GM12878 (cell line): ENCODE measurements at regions of chr3 and their contacts with region 1.

Region 1: GRCh38 chr3:189710620-189711402 is 79.6 kb downstream of the TP63 start:
- DNase-seq: peak; percentile 71
- ATAC-seq: peak; percentile 84
- H3K4me3 ChIP-seq: no peak overlapping the region
- H3K27ac ChIP-seq: peak overlapping the region; percentile 40
- H3K4me1 ChIP-seq: peaks cover 30% of the 10 kb centered on the region
- H3K27me3 ChIP-seq: no peaks in the 10 kb centered on the region
- CTCF ChIP-seq: no peak
- EP300 ChIP-seq: no peak
- POLR2A ChIP-seq: no peak
- RAD21 ChIP-seq: no peak

Region 2: DNA sequence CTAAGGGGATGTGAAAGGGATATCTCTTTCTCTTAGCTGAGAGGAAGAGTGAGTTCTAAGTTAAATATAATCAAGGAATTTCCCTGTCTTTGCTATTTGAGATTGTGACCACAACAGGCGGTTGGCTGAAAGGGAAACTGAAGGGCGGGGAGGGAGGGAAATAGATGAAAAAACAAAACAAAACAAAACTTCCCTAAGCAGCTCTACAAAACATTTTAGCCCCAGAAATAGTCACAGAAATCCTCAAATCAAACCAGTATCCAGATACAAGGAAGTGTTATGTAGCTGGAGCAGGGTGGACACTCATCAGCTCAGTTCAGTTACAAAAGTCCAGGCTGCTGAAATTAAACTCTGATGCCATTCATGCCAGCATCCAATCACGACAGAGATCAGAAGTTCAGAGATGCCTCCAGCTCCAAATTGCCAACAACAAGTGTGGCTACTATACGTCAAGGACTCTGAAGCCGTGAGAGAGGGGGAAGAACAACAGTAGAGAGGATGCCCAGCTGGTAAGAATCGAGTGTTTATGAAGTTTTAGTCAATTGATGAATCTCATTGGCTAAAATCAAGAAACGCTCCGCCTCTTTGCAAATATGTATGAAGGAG is 79.9 kb before region 1 on chr3:
- CTCF ChIA-PET with region 1: no interaction called
- POLR2A ChIA-PET with region 1: interaction called, 3 read pairs
- RAD21 ChIA-PET with region 1: interaction called, 5 read pairs
- SMC1A ChIA-PET with region 1: interaction called, 4 read pairs
- in situ Hi-C with region 1: no loop called
- intact Hi-C with region 1: loop called (anchors 2 kb)
- DNase-seq: peak; percentile 73
- ATAC-seq: peak; percentile 81
- H3K4me3 ChIP-seq: peak overlapping the region; percentile 65
- H3K27ac ChIP-seq: peak overlapping the region; percentile 86
- H3K4me1 ChIP-seq: peaks cover 13% of the 10 kb centered on the region; the same call in 1 of the 2 replicates
- H3K27me3 ChIP-seq: no peaks in the 10 kb centered on the region
- CTCF ChIP-seq: no peak
- EP300 ChIP-seq: peak in 1 of 2 experiments; percentile 41; a peak in 1 of 4 replicates
- POLR2A ChIP-seq: no peak
- RAD21 ChIP-seq: 0 out of 2 replicates have a peak, but pooled peaks have one; percentile 6

Region 3: DNA sequence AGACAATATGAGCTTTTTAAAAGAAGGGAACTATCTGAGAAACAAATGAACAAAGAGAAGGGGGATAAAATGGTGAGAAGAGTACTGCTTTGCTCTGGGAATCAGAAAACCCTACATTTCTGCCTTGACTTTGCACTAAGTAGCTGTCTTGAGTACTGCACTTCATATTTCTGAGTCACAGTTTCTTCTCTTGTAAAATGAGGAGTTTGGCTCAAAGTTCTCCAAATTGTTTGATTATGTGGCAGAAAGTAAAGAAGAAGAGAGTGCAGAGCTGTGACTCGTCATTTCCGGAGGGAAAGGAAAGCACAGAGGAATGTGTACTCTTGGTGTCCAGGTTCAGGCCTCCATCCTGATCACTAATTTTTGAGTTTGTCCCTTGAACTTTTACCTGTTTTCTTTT is 25.0 kb before region 1 on chr3:
- CTCF ChIA-PET with region 1: interaction called, 3 read pairs
- POLR2A ChIA-PET with region 1: no interaction called
- RAD21 ChIA-PET with region 1: no interaction called
- SMC1A ChIA-PET with region 1: interaction called, 17 read pairs
- in situ Hi-C with region 1: no loop called
- intact Hi-C with region 1: no loop called
- DNase-seq: no peak
- ATAC-seq: no peak
- H3K4me3 ChIP-seq: no peak overlapping the region
- H3K27ac ChIP-seq: no peak overlapping the region
- H3K4me1 ChIP-seq: no peaks in the 10 kb centered on the region
- H3K27me3 ChIP-seq: no peaks in the 10 kb centered on the region
- CTCF ChIP-seq: no peak
- EP300 ChIP-seq: no peak
- POLR2A ChIP-seq: no peak
- RAD21 ChIP-seq: no peak

Region 4: GRCh38 chr3:189720736-189721417 is 10.1 kb after region 1 on chr3:
- CTCF ChIA-PET with region 1: interaction called, 3 read pairs
- POLR2A ChIA-PET with region 1: no interaction called
- RAD21 ChIA-PET with region 1: interaction called, 4 read pairs
- SMC1A ChIA-PET with region 1: interaction called, 28 read pairs
- in situ Hi-C with region 1: no loop called
- intact Hi-C with region 1: no loop called
- DNase-seq: no peak
- ATAC-seq: no peak
- H3K4me3 ChIP-seq: no peak overlapping the region
- H3K27ac ChIP-seq: no peak overlapping the region
- H3K4me1 ChIP-seq: no peaks in the 10 kb centered on the region
- H3K27me3 ChIP-seq: no peaks in the 10 kb centered on the region
- CTCF ChIP-seq: no peak
- EP300 ChIP-seq: no peak
- POLR2A ChIP-seq: no peak
- RAD21 ChIP-seq: no peak

Region 5: GRCh38 chr3:189727898-189728297 is 17.1 kb after region 1 on chr3:
- CTCF ChIA-PET with region 1: interaction called, 4 read pairs
- POLR2A ChIA-PET with region 1: no interaction called
- RAD21 ChIA-PET with region 1: no interaction called
- SMC1A ChIA-PET with region 1: interaction called, 28 read pairs
- in situ Hi-C with region 1: no loop called
- intact Hi-C with region 1: loop called (anchors 2 kb)
- DNase-seq: no peak
- ATAC-seq: no peak
- H3K4me3 ChIP-seq: no peak overlapping the region
- H3K27ac ChIP-seq: no peak overlapping the region
- H3K4me1 ChIP-seq: no peaks in the 10 kb centered on the region
- H3K27me3 ChIP-seq: no peaks in the 10 kb centered on the region
- CTCF ChIP-seq: no peak
- EP300 ChIP-seq: no peak
- POLR2A ChIP-seq: no peak
- RAD21 ChIP-seq: no peak